Mammary epithelial cell (primary cell): ENCODE measurements at regions of chr14 and their contacts with region 1.

Region 1: DNA sequence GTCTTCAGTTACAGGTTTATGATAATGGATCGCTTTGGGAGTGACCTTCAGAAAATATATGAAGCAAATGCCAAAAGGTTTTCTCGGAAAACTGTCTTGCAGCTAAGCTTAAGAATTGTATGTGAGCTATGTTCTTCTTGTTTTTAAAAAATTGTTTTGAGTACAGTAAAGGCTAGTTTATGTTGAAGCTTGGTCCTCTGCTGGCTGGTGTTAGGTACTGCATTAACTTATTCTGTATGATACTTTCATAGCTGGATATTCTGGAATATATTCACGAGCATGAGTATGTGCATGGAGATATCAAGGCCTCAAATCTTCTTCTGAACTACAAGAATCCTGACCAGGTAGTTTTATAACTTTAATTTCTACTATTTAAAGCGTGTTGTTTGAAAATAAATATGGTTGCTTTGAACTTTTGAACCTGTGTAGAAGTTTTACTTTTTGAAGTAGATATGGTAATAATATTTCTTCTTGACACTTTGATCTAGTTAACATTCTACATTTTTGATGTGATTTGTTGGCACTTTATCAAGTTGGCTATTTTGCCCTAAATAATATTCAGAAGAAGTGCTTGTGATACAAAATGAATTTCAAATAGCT is 55.7 kb downstream of the VRK1 start:
- DNase-seq: peak; percentile 25
- H3K4me3 ChIP-seq: no peak overlapping the region
- H3K27ac ChIP-seq: no peak overlapping the region
- H3K4me1 ChIP-seq: peaks cover 5% of the 10 kb centered on the region
- H3K27me3 ChIP-seq: no peaks in the 10 kb centered on the region
- CTCF ChIP-seq: peak; percentile 79

Region 2: DNA sequence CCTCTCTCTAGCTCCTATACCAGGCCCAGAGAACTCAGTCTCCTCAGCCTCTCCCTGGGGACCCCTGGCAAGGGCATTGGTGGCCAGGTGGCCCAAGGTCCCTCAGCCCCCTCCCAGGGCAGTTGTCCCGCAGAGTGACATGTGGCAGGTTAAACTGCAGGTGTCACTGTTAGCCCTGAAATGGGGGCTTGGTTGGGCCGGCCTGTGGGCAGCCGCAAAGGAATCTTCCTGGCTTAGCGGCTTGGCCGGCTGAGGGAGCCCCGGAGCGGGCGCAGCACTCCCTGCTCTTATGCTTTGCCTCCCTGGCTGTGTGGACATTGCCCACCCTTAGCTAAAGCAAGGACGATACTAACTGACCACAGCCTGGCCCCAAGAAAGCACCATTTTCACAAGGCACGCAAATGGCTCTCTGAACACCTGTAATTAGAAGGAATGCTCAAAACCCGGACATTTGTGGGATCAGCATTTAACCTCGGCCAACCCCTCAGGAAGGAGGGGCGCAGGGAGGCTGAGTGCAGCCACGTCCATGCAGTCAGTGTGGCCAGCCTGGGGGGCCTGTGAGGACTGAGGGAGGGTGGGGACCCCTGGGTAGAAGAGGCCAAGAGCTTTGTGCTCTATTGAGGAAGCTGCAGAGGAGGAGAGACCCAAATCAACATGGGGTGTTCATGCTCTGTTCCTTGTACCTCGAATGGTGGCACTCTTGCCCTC is 268.6 kb before region 1 on chr14:
- CTCF ChIA-PET with region 1: no interaction called
- dilution Hi-C with region 1: no loop called
- in situ Hi-C with region 1: no loop called
- intact Hi-C with region 1: loop called (anchors 1 kb)
- DNase-seq: peak; percentile 29
- H3K4me3 ChIP-seq: no peak overlapping the region
- H3K27ac ChIP-seq: no peak overlapping the region
- H3K4me1 ChIP-seq: no peaks in the 10 kb centered on the region
- H3K27me3 ChIP-seq: peaks cover 4% of the 10 kb centered on the region
- CTCF ChIP-seq: peak; percentile 30 to 57

Region 3: DNA sequence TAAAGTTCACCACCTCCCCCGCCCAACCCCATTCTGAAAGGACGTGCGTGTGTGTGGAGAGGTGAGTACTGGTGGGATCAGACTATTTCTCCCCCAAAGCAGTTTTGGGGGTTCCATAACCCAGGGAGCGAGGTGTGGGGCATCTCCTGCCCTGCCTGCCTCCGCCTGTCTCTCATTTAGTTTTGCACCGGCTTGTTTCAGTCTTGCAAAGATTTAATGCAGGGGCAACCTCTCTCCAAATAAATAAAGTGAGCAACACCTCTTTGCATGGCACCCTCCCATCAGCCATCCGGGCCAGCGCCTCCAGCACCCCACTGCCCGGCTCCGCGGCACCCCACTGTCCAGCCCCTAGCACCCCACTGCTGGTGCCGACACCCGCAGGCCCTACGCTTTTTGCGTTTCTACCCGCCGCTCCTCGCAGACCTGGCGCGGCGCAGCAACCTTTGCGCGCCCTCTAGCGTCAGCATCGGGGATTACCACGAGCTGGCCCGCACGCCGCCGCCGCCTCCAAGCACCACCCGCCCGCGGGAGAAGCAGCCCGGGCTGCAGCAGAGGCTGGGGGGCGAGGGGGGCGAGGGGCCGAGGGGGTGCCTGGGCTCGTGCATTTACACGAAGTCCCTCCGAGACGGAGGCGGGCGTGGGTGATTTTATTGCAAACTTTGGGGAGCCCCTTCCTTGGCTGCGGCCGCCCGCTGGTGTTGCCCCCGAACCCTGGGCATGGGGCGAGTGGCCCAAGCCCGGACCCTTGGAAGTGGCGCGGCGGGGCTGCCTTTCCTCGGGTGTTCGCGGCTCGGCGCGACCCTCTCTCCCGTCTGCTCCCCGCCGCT is 111.6 kb before region 1 on chr14:
- CTCF ChIA-PET with region 1: interaction called, 3 read pairs
- dilution Hi-C with region 1: no loop called
- in situ Hi-C with region 1: no loop called
- intact Hi-C with region 1: loop called (anchors 5 kb)
- DNase-seq: peak; percentile 37
- H3K4me3 ChIP-seq: peak overlapping the region; percentile 49 to 56 (median 50)
- H3K27ac ChIP-seq: no peak overlapping the region
- H3K4me1 ChIP-seq: no peaks in the 10 kb centered on the region
- H3K27me3 ChIP-seq: peaks cover 10% of the 10 kb centered on the region
- CTCF ChIP-seq: peak; percentile 50 to 84

Region 4: DNA sequence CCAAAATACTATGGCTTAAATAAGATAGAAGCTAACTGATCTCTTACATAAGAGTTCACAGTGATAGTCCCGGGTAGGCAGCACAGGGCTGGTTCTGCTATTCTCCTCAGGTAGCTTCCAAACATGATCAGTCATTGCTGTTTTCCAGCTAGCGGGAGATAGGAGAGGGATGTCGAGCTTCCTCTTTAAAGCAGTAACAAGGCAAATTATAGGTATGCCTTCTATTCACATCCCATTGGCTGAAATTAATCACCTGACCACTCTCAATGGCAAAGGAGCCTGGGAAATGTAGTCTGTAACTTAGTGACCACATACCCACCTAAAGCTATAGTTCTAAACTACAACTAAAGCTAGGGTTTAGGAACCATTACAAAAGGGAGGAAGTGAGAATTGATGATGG is 90.3 kb before region 1 on chr14:
- CTCF ChIA-PET with region 1: no interaction called
- dilution Hi-C with region 1: no loop called
- in situ Hi-C with region 1: no loop called
- intact Hi-C with region 1: loop called (anchors 5 kb)
- DNase-seq: peak; percentile 75
- H3K4me3 ChIP-seq: no peak overlapping the region
- H3K27ac ChIP-seq: no peak overlapping the region
- H3K4me1 ChIP-seq: no peaks in the 10 kb centered on the region
- H3K27me3 ChIP-seq: no peaks in the 10 kb centered on the region
- CTCF ChIP-seq: no peak

Region 5: GRCh38 chr14:96783915-96784224 is 69.1 kb before region 1 on chr14:
- CTCF ChIA-PET with region 1: no interaction called
- dilution Hi-C with region 1: no loop called
- in situ Hi-C with region 1: no loop called
- intact Hi-C with region 1: loop called (anchors 5 kb)
- DNase-seq: peak; percentile 71
- H3K4me3 ChIP-seq: peak overlapping the region in 1 of 3 experiments; percentile 12
- H3K27ac ChIP-seq: peak overlapping the region; percentile 90
- H3K4me1 ChIP-seq: peaks cover 14% of the 10 kb centered on the region
- H3K27me3 ChIP-seq: no peaks in the 10 kb centered on the region
- CTCF ChIP-seq: no peak

Region 6: GRCh38 chr14:96796851-96797581 is 55.9 kb before region 1 on chr14 and contains the start of gene VRK1:
- CTCF ChIA-PET with region 1: interaction called, 8 read pairs
- dilution Hi-C with region 1: no loop called
- in situ Hi-C with region 1: no loop called
- intact Hi-C with region 1: loop called (anchors 1 kb)
- DNase-seq: peak; percentile 97
- H3K4me3 ChIP-seq: peak within 1 kb of the TSS; percentile 69 to 89 (median 75)
- H3K27ac ChIP-seq: peak within 1 kb of the TSS; percentile 81
- H3K4me1 ChIP-seq: no peaks in the 10 kb centered on the region
- H3K27me3 ChIP-seq: no peaks in the 10 kb centered on the region
- CTCF ChIP-seq: no peak
- total RNA-seq, gene VRK1: 15.5 to 27.9 TPM

Region 7: GRCh38 chr14:97757491-97757890 is 904.6 kb after region 1 on chr14:
- CTCF ChIA-PET with region 1: no interaction called
- dilution Hi-C with region 1: no loop called
- in situ Hi-C with region 1: no loop called
- intact Hi-C with region 1: no loop called
- DNase-seq: no peak
- H3K4me3 ChIP-seq: no peak overlapping the region
- H3K27ac ChIP-seq: no peak overlapping the region
- H3K4me1 ChIP-seq: no peaks in the 10 kb centered on the region
- H3K27me3 ChIP-seq: no peaks in the 10 kb centered on the region
- CTCF ChIP-seq: no peak